ENCODE measurements at regions of chr11 and their contacts with region 1.

Region 1: GRCh38 chr11:56103210-56103737 is at the start of gene OR8H2:
- DNase-seq: no peak

Region 2: DNA sequence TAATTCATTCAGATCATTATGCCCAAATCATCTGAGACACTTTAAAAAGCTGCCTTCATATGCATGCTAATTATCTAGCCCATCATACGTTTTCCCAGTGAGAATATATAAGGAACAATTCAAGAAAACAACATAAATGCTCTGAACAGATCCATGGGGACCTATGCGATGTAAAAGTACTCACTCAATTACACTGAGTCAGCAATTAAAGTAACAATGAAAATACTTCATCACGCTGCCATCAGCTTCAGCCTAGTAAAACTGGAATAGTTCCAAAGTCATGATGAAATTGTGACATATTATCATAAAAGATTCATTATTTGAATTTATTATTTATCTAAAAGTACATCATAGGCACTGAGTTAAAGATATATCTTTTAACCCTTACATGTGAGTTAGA is 60.5 kb after region 1 on chr11:
- intact Hi-C with region 1: loop called (anchors 10 kb)
- DNase-seq: no peak

Measured in head of caudate nucleus (tissue), 42 donors.